GM23248 (cell line): ENCODE measurements at regions of chr11 and their contacts with region 1.

Region 1: GRCh38 chr11:75907906-75908527 is 93.0 kb downstream of the UVRAG start:
- DNase-seq: no peak
- H3K4me3 ChIP-seq: no peak overlapping the region
- H3K27ac ChIP-seq: no peak overlapping the region
- H3K4me1 ChIP-seq: peaks cover 10% of the 10 kb centered on the region
- H3K27me3 ChIP-seq: no peaks in the 10 kb centered on the region

Region 2: DNA sequence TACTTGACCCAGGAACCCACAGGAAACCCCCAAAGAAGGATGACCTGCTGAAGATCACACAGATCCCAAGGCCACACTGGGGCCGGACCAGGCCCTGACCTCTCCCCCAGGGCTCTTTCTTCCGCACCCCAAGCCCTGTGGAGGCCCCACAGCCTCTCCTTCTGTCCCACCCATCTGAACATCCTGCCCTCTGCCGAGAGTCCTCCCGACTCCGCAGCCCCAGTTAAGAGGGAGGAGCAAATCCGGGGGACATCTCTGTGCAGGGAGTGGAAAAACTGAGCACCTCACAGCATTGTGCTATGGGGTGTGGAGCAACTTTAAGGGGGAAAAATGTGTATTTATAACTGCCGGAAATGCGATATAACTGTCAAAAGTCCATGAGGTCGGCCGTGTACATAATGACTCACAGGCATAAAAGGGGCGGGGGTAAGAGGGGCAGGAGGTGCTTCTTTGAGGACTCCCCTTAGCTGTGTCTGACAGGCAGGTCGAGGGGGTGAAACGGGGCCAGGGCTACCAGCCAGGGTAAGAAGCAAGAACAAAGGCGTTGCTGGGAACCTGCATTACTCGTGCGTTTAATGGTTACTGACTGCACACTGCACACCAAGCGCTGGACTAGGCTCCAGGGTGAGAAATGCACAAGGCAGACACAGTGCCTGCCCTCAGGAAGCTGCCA is 241.1 kb after region 1 on chr11:
- in situ Hi-C with region 1: loop called (anchors 10 kb)
- DNase-seq: no peak
- H3K4me3 ChIP-seq: no peak overlapping the region
- H3K27ac ChIP-seq: no peak overlapping the region
- H3K4me1 ChIP-seq: peaks cover 10% of the 10 kb centered on the region
- H3K27me3 ChIP-seq: no peaks in the 10 kb centered on the region